Ovary (tissue), 10 donors: ENCODE measurements at regions of chr6 and their contacts with region 1.

Region 1: GRCh38 chr6:141398949-141399348 is 733.8 kb upstream of the GJE1 start:
- DNase-seq: no peak
- H3K4me3 ChIP-seq: no peak overlapping the region
- H3K27ac ChIP-seq: no peak overlapping the region
- H3K4me1 ChIP-seq: no peaks in the 10 kb centered on the region
- H3K27me3 ChIP-seq: no peaks in the 10 kb centered on the region
- CTCF ChIP-seq: no peak
- EP300 ChIP-seq: no peak
- POLR2A ChIP-seq: no peak

Region 2: GRCh38 chr6:141248021-141248799 is 150.7 kb before region 1 on chr6:
- intact Hi-C with region 1: loop called in 1 of 4 experiments (anchors 10 kb)
- DNase-seq: no peak
- H3K4me3 ChIP-seq: no peak overlapping the region
- H3K27ac ChIP-seq: no peak overlapping the region
- H3K4me1 ChIP-seq: no peaks in the 10 kb centered on the region
- H3K27me3 ChIP-seq: no peaks in the 10 kb centered on the region
- CTCF ChIP-seq: no peak
- EP300 ChIP-seq: no peak
- POLR2A ChIP-seq: no peak

Region 3: GRCh38 chr6:141498977-141499376 is 100.0 kb after region 1 on chr6:
- intact Hi-C with region 1: no loop called
- DNase-seq: no peak
- H3K4me3 ChIP-seq: no peak overlapping the region
- H3K27ac ChIP-seq: no peak overlapping the region
- H3K4me1 ChIP-seq: no peaks in the 10 kb centered on the region
- H3K27me3 ChIP-seq: no peaks in the 10 kb centered on the region
- CTCF ChIP-seq: no peak
- EP300 ChIP-seq: no peak
- POLR2A ChIP-seq: no peak

Region 4: GRCh38 chr6:142756215-142756634 is 1357.3 kb after region 1 on chr6:
- intact Hi-C with region 1: no loop called
- DNase-seq: no peak
- H3K4me3 ChIP-seq: no peak overlapping the region
- H3K27ac ChIP-seq: no peak overlapping the region
- H3K4me1 ChIP-seq: no peaks in the 10 kb centered on the region
- H3K27me3 ChIP-seq: no peaks in the 10 kb centered on the region
- CTCF ChIP-seq: no peak
- EP300 ChIP-seq: no peak
- POLR2A ChIP-seq: no peak